GM12878 (cell line): ENCODE measurements at regions of chr15 and their contacts with region 1.

Region 1: GRCh38 chr15:90869601-90870353 is 1.4 kb downstream of the FURIN start:
- DNase-seq: no peak
- ATAC-seq: peak; percentile 20
- H3K4me3 ChIP-seq: peak overlapping the region; percentile 94; the same call in 1 of the 2 replicates
- H3K27ac ChIP-seq: no peak overlapping the region
- H3K4me1 ChIP-seq: peaks cover 28% of the 10 kb centered on the region
- H3K27me3 ChIP-seq: no peaks in the 10 kb centered on the region
- CTCF ChIP-seq: no peak
- EP300 ChIP-seq: no peak
- POLR2A ChIP-seq: no peak
- RAD21 ChIP-seq: no peak

Region 2: DNA sequence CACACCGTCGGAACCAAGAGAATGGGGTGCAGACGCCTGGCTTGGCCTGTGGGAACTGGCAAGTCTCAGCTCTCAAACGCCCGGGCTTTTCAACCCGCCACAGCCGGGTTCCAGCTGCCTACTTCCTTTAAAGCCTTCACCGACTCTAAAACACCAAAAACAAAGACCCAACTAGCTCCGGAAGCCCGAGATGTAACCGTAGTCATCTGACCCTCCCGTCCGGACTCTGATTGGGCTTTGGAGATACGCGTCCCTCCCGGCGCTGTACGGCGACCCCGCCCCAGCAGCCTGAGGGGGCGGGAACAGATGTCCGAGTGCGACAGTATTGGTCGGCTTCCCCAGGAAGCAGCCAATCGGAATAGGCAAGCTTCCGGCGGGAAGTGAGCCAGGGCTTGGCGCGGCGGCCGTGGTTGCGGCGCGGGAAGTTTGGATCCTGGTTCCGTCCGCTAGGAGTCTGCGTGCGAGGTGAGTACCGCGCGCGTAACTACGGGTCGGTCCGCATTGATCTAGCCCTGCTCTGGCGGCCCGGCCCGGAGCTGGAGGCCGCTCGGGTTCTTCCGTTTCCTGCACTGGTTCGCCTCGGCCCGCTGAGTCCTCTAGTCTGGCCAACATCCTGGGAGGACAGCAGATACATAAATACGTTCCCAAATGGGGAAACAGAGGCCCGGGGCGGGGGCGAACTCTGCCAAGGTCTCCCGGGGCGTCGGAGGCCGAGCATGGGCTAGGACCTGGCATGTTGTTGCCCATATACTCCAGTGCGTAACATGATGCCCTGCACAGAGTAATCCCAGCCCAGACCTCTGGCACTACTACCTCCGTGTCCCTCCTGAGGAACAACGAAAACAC is 152.6 kb before region 1 on chr15 and contains the start of gene BLM:
- CTCF ChIA-PET with region 1: interaction called, 3 read pairs
- POLR2A ChIA-PET with region 1: interaction called, 4 read pairs
- RAD21 ChIA-PET with region 1: interaction called, 5 read pairs
- SMC1A ChIA-PET with region 1: no interaction called
- in situ Hi-C with region 1: no loop called
- intact Hi-C with region 1: loop called (anchors 5 kb)
- DNase-seq: peak; percentile 93
- ATAC-seq: peak; percentile 99
- H3K4me3 ChIP-seq: peak within 1 kb of the TSS; percentile 91
- H3K27ac ChIP-seq: peak within 1 kb of the TSS; percentile 94
- H3K4me1 ChIP-seq: peaks cover 15% of the 10 kb centered on the region
- H3K27me3 ChIP-seq: no peaks in the 10 kb centered on the region
- CTCF ChIP-seq: peak in 1 of 3 experiments; percentile 22; a peak in 1 of 6 replicates
- EP300 ChIP-seq: no peak
- POLR2A ChIP-seq: peak; percentile 85
- RAD21 ChIP-seq: no peak
- polyA plus RNA-seq, gene BLM: 25.3 to 28.2 TPM

Region 3: GRCh38 chr15:90789462-90789861 is 80.3 kb before region 1 on chr15:
- CTCF ChIA-PET with region 1: no interaction called
- POLR2A ChIA-PET with region 1: interaction called, 3 read pairs
- RAD21 ChIA-PET with region 1: interaction called, 7 read pairs
- SMC1A ChIA-PET with region 1: interaction called, 4 read pairs
- in situ Hi-C with region 1: no loop called
- intact Hi-C with region 1: loop called (anchors 5 kb)
- DNase-seq: no peak
- ATAC-seq: no peak
- H3K4me3 ChIP-seq: no peak overlapping the region
- H3K27ac ChIP-seq: no peak overlapping the region
- H3K4me1 ChIP-seq: peaks cover 11% of the 10 kb centered on the region
- H3K27me3 ChIP-seq: no peaks in the 10 kb centered on the region
- CTCF ChIP-seq: no peak
- EP300 ChIP-seq: no peak
- POLR2A ChIP-seq: no peak
- RAD21 ChIP-seq: no peak

Region 4: DNA sequence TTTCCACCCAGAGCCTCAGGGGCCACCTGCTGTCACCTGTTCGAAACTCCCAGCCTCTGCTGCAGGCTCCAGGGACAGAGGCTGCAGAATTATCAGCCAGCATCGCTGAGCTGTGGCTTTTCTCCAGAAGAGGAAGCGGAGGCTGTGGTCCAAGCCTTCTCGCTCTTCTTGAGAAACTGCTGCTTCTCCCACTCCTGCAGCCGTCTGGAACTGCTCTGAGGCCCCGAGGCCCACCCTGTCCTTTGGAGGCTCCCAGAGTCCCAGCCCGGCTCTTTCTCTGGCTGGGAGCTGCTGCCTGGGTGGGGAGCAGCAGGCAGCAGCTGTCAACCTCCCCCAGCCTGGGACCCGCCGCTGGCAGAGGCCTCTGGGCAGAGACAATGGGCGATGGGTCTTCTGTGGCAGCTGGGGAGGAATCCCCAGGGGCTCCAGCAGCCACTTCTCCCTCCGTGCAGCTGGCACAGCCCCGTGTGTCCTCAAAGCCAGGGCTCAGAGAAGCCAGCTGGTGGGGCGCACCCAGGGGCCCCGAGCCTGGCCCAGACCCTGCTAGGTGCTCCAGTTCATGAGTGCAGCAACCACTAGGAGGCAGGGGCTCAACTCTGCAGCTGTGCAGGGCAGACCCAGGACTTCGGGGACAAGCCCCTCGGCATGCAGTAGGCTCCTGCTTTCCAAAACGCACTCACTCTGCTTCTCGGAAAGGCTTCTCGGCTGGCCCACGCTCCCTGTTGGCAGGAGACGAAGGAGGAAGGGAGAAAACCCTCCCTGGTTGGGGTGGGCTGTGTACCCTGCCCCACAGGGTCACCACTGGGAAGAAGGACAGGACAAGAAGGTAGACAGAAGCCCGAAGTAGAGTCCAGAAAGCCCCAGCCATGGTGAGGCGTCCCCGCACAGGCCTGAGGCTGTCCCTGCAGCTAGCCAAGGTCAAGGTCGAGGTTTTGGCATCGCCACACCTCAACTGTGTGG is 51.2 kb before region 1 on chr15:
- CTCF ChIA-PET with region 1: interaction called, 4 read pairs
- POLR2A ChIA-PET with region 1: interaction called, 3 read pairs
- RAD21 ChIA-PET with region 1: interaction called, 5 read pairs
- SMC1A ChIA-PET with region 1: interaction called, 10 read pairs
- in situ Hi-C with region 1: no loop called
- intact Hi-C with region 1: loop called (anchors 1 kb)
- DNase-seq: no peak
- ATAC-seq: peak; percentile 71
- H3K4me3 ChIP-seq: no peak overlapping the region
- H3K27ac ChIP-seq: no peak overlapping the region
- H3K4me1 ChIP-seq: peaks cover 25% of the 10 kb centered on the region
- H3K27me3 ChIP-seq: no peaks in the 10 kb centered on the region
- CTCF ChIP-seq: peak; percentile 21 to 38 (median 33); a peak in 3 of 6 replicates
- EP300 ChIP-seq: no peak
- POLR2A ChIP-seq: no peak
- RAD21 ChIP-seq: peak; percentile 63

Region 5: DNA sequence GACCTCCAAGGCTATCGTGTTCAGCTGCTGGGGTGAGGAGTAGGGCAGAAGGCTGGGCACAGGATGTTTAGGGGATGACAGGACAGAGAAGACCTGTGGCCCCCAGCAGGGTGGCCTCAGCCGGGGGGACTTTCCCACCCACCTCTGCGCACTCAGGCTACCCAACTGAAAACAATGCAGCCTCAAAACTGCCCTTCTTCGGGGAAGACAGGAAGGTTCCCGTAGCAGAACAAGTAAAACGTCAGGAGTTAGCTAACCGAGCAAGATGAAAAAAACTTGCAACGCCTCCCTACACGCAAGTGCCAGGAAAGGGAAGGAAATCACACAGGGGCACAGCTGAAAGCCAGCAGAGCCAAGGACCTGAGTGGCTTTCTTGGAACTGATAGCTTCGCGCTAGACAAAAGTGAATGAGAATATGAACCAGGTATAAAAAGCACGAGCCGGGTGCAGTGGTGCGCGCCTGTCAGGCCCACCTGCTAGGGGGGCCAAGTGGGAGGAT is 39.8 kb before region 1 on chr15:
- CTCF ChIA-PET with region 1: no interaction called
- POLR2A ChIA-PET with region 1: interaction called, 4 read pairs
- RAD21 ChIA-PET with region 1: interaction called, 3 read pairs
- SMC1A ChIA-PET with region 1: interaction called, 3 read pairs
- in situ Hi-C with region 1: no loop called
- intact Hi-C with region 1: loop called (anchors 5 kb)
- DNase-seq: no peak
- ATAC-seq: peak; percentile 96
- H3K4me3 ChIP-seq: peak overlapping the region; percentile 47; the same call in 1 of the 2 replicates
- H3K27ac ChIP-seq: peak overlapping the region; percentile 18; the same call in 1 of the 2 replicates
- H3K4me1 ChIP-seq: peaks cover 9% of the 10 kb centered on the region
- H3K27me3 ChIP-seq: no peaks in the 10 kb centered on the region
- CTCF ChIP-seq: no peak
- EP300 ChIP-seq: no peak; a peak in 1 of 4 replicates
- POLR2A ChIP-seq: no peak
- RAD21 ChIP-seq: no peak

Region 6: GRCh38 chr15:90982135-90982534 is 112.4 kb after region 1 on chr15:
- CTCF ChIA-PET with region 1: no interaction called
- POLR2A ChIA-PET with region 1: no interaction called
- RAD21 ChIA-PET with region 1: no interaction called
- SMC1A ChIA-PET with region 1: no interaction called
- in situ Hi-C with region 1: no loop called
- intact Hi-C with region 1: no loop called
- DNase-seq: no peak
- ATAC-seq: peak; percentile 75
- H3K4me3 ChIP-seq: no peak overlapping the region
- H3K27ac ChIP-seq: peak overlapping the region; percentile 79
- H3K4me1 ChIP-seq: peaks cover 27% of the 10 kb centered on the region
- H3K27me3 ChIP-seq: no peaks in the 10 kb centered on the region
- CTCF ChIP-seq: no peak
- EP300 ChIP-seq: no peak
- POLR2A ChIP-seq: no peak
- RAD21 ChIP-seq: no peak